Astrocyte of the cerebellum (primary cell): ENCODE measurements at regions of chr10 and their contacts with region 1.

Region 1: DNA sequence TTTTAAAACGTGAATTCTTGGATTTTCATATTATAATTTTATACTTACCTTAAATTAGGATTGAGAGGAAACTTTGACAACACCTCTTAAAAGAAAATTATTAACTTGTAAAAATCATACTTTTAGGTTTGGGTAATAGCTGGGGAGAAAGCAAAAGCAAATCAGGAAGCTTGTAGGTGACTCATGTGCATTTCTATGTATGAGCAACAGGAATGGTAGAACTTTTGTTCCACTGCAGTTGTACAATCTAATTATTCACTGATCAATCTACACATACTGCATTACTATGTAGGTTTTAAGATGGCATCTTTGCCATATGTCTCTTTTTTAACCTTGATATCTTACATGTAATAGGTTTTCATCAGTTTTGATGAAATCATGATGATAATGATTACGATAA is 223.2 kb downstream of the PRKG1 start:
- DNase-seq: no peak
- H3K4me3 ChIP-seq: no peak overlapping the region
- CTCF ChIP-seq: no peak

Region 2: GRCh38 chr10:51325649-51326048 is 28.2 kb after region 1 on chr10:
- in situ Hi-C with region 1: loop called (anchors 5 kb)
- DNase-seq: no peak
- H3K4me3 ChIP-seq: no peak overlapping the region
- CTCF ChIP-seq: no peak